Activated B cell treated with CpG ODN at 0.5 μM for 24 hours (primary cell): ENCODE measurements at regions of chr11 and their contacts with region 1.

Region 1: DNA sequence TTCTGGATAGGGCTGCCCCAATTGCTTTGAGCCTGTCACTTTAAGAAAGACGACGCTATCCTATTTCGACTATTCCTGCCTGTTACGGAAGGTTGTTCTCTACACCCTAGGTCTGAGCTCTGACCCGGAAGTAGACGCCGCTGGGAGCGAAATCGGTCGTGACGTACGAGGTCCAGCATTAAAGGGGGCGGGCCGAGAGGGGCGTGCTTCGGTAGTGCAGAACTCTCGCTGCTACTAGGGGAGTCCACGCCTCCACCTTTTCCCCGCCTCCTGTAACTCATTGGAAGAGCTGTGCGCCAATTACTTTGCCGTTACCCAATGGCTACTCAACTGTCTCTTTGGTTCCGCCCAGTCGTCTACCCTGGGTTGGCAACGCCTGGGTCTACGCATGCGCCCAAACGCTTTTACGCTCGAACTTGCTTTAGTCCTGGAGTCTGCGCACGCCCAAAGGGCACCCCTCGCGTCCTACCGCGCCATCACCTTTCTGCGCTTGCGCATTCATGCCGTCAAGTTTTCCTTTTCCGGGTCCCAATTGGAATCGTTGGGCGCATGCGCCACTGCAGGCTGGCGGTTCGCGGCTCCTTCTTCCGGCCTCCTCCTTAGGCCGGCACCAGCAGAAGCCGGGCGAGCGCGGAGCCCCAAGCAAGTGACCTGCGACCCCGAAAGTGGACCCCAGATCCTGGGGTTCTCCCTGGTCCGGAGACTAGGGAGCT is at the start of gene PCNX3:
- DNase-seq: peak; percentile 96
- ATAC-seq: peak; percentile 90
- H3K4me3 Mint-ChIP-seq: peak within 1 kb of the TSS; percentile 97
- H3K27ac Mint-ChIP-seq: peak within 1 kb of the TSS; percentile 96
- H3K4me1 Mint-ChIP-seq: peaks cover 58% of the 10 kb centered on the region
- H3K27me3 Mint-ChIP-seq: no peaks in the 10 kb centered on the region
- CTCF ChIP-seq: no peak
- total RNA-seq, gene PCNX3: 45.3 and 51.4 TPM in 2 replicates

Region 2: DNA sequence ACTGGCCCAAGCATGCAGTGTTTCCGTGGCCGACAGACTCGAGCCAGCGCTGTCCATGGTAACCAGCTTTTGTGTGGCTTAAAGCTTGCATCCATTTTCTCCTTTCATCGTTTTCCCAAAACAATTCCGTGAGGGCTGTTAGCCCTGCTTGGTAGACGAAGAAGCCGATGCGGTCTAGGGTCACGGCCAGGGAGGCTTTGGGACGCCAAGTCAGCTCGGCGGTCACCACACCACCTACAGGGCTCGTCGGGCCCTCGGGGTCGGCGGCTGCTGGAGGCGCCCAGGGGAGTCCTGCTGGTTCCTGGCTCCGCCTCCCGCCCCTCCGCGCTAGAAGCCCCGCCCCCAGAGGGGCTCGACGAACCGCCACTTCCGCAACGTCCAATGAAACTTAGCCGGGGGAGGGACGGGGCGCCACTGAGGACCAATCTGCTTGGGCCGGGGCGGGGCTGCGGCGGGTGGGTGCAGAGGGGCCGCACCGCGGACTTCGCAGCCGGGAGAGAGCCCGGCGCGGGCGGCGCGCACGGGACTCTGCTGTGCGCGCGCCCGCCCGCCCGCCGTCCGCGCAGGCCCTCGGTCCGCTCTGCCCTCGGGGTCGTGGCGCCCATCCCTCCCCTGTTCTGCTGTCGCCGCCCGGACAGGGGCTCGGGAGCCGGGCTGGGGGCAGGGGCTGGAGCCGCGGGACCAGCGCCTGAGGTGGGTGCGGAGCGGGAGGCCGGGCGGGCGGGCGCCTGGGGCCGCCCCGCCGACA is 260.9 kb before region 1 on chr11 and contains the start of gene TIGD3:
- CTCF ChIA-PET with region 1: no interaction called
- POLR2A ChIA-PET with region 1: no interaction called
- intact Hi-C with region 1: loop called (anchors 1 kb)
- DNase-seq: peak; percentile 96
- ATAC-seq: peak; percentile 97
- H3K4me3 Mint-ChIP-seq: peak within 1 kb of the TSS; percentile 91
- H3K27ac Mint-ChIP-seq: peak within 1 kb of the TSS; percentile 83
- H3K4me1 Mint-ChIP-seq: peaks cover 23% of the 10 kb centered on the region
- H3K27me3 Mint-ChIP-seq: no peaks in the 10 kb centered on the region
- CTCF ChIP-seq: no peak
- total RNA-seq, gene TIGD3: 1.4 and 1.6 TPM in 2 replicates

Region 3: GRCh38 chr11:65532388-65533064 is 82.9 kb before region 1 on chr11:
- CTCF ChIA-PET with region 1: no interaction called
- POLR2A ChIA-PET with region 1: no interaction called
- intact Hi-C with region 1: no loop called
- DNase-seq: no peak
- ATAC-seq: no peak
- H3K4me3 Mint-ChIP-seq: no peak overlapping the region
- H3K27ac Mint-ChIP-seq: no peak overlapping the region
- H3K4me1 Mint-ChIP-seq: peaks cover 2% of the 10 kb centered on the region
- H3K27me3 Mint-ChIP-seq: no peaks in the 10 kb centered on the region
- CTCF ChIP-seq: no peak

Region 4: DNA sequence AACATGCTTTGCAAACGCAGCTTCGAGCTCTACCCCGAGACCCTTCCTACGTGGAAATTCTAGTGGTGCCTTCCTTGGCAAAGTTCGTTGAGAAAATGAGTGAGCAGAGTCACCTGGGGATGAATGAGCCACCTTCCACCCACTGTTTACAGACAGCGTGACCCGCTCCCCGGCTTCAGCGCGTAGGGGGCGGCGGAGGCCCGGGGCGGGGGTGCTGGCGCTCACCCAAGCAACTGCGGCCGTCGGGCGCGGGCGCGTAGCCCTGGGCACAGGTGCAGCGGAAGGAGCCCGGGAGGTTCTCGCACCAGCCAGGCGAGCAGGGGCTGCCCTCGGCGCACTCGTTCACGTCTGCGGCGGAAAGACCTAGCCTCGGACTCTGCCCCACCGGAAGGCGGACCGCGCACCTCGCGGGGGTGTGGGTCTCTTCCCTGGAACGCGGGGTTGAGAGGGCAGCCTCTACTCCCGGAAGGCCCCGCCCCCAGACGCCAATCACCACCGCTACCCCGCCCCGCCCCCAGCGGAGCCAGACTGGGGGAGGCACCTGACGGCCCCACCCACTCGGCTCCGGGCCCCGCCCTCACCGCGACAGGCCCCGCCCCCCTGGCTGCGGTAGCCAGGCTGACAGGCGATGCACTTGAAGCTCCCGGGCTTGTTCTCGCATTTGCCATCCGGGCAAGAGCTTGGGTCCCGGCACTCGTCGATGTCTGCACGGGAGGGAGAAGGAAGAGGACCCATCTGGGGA is 69.0 kb before region 1 on chr11:
- CTCF ChIA-PET with region 1: interaction called, 14 read pairs
- POLR2A ChIA-PET with region 1: interaction called, 11 read pairs
- intact Hi-C with region 1: no loop called
- DNase-seq: peak; percentile 99
- ATAC-seq: peak; percentile 89
- H3K4me3 Mint-ChIP-seq: peak overlapping the region; percentile 85
- H3K27ac Mint-ChIP-seq: peak overlapping the region; percentile 89
- H3K4me1 Mint-ChIP-seq: peaks cover 54% of the 10 kb centered on the region
- H3K27me3 Mint-ChIP-seq: no peaks in the 10 kb centered on the region
- CTCF ChIP-seq: no peak

Region 5: DNA sequence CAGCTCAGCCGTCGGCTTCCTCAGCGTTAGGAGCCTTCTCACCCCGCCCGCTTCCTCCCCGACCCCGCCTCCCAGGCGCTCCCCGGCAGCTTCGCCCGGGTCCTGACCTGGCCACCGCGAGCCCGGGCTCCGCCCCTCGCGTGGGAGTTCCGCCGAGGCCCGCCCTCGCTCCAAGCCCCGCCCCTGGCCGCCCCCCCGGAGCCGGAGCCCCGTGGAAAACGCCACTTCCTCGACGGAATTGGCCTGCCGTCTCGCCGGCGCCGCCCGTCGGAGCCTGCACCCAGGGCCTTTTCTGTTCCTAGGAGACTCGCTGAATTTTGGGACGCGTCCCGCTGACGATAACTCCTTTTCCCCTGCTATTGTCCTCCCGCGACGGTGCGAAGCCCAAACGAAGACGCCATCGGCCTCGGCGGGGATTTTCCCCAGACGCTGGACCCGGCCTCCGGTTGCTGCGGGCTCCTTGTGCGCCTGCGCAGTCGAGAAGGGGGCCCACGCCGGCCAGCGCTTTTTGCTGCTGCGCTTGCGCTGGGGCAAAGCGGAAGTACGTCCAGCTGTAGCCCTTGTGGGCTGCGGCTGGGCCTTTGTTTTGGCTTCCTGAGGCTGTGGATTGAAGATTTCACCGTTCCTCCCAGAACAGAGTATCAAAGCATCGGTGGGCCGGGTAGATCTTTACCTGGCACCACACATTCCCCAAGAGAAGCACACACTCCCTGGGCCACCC is 37.3 kb after region 1 on chr11:
- CTCF ChIA-PET with region 1: no interaction called
- POLR2A ChIA-PET with region 1: interaction called, 19 read pairs
- intact Hi-C with region 1: loop called (anchors 1 kb)
- DNase-seq: peak; percentile 98
- ATAC-seq: peak; percentile 89
- H3K4me3 Mint-ChIP-seq: peak overlapping the region; percentile 90
- H3K27ac Mint-ChIP-seq: peak overlapping the region; percentile 95
- H3K4me1 Mint-ChIP-seq: peaks cover 44% of the 10 kb centered on the region
- H3K27me3 Mint-ChIP-seq: no peaks in the 10 kb centered on the region
- CTCF ChIP-seq: no peak

Region 6: DNA sequence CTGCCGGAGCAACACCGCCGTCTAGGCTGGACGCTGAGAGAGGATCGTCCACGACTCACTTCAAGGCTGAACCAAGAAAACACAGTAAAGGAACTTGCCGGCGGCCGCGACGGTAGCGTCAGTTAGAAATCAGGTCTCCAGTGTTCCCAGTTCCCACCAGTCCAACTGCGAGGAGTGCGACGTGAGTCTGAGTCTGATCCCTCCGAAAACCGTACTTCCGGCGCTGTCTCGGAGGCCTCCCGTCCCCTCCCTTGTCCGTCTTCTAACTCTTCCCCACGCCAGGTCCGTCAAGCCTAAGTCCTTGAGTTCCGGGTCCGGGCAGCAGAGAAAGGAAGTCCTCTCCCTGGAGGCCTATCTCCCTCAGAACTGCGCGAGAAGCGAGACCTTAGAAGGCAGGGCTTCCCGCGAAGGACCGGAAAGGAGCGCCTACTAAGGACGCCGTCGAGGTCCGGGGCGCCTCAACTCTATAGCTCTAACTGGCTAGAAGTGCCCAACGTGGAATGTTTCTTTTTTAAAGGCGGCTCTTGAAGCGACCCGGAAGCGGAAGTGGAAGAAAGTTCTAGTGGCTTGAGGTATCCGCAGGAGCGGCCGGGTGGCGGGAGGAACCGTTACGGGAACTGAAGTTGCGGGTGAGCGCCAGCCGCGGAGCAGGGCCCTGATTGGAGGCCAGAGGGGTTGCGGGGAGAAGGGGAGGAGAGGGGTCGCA is 386.7 kb after region 1 on chr11 and contains the starts of genes BANF1 and EIF1AD:
- CTCF ChIA-PET with region 1: no interaction called
- POLR2A ChIA-PET with region 1: interaction called, 6 read pairs
- intact Hi-C with region 1: loop called (anchors 1 kb)
- DNase-seq: peak; percentile 86
- ATAC-seq: peak; percentile 82
- H3K4me3 Mint-ChIP-seq: peak within 1 kb of the TSS; percentile 100
- H3K27ac Mint-ChIP-seq: peak within 1 kb of the TSS; percentile 98
- H3K4me1 Mint-ChIP-seq: peaks cover 36% of the 10 kb centered on the region
- H3K27me3 Mint-ChIP-seq: no peaks in the 10 kb centered on the region
- CTCF ChIP-seq: no peak
- total RNA-seq, gene BANF1: 220 and 228 TPM in 2 replicates
- total RNA-seq, gene EIF1AD: 50.7 and 58.9 TPM in 2 replicates

Region 7: GRCh38 chr11:66466225-66467027 is 851.0 kb after region 1 on chr11 and contains the start of gene PELI3:
- CTCF ChIA-PET with region 1: no interaction called
- POLR2A ChIA-PET with region 1: interaction called, 10 read pairs
- intact Hi-C with region 1: no loop called
- DNase-seq: peak; percentile 92
- ATAC-seq: peak; percentile 92
- H3K4me3 Mint-ChIP-seq: peak within 1 kb of the TSS; percentile 88
- H3K27ac Mint-ChIP-seq: peak within 1 kb of the TSS; percentile 84
- H3K4me1 Mint-ChIP-seq: peaks cover 43% of the 10 kb centered on the region
- H3K27me3 Mint-ChIP-seq: no peaks in the 10 kb centered on the region
- CTCF ChIP-seq: no peak
- total RNA-seq, gene PELI3: 8.5 and 9.1 TPM in 2 replicates